ENCODE measurements at regions of chr10 and their contacts with region 1.

Region 1: GRCh38 chr10:104121520-104122224 is at the start of gene SFR1:
- DNase-seq: peak; percentile 71
- H3K4me3 ChIP-seq: peak within 1 kb of the TSS; percentile 86
- CTCF ChIP-seq: peak; percentile 81

Region 2: GRCh38 chr10:103895411-103896186 is 226.1 kb before region 1 on chr10:
- CTCF ChIA-PET with region 1: interaction called, 97 read pairs
- POLR2A ChIA-PET with region 1: no interaction called
- DNase-seq: no peak
- H3K4me3 ChIP-seq: no peak overlapping the region
- CTCF ChIP-seq: no peak

Region 3: DNA sequence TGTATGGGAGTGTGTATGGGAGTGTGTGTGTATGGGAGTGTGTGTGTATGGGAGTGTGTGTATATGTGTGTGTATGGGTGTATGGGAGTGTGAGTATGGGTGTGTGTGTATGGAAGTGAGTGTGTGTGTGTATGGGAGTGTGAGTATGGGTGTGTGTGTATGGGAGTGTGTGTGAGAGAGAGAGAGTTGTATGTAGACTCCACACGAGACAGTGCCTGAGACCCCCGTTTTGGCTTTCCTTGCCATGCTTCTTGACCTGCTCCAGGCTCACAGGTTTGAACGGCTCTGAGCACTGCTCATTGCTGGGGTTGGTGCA is 85.6 kb before region 1 on chr10:
- CTCF ChIA-PET with region 1: interaction called, 15 read pairs
- POLR2A ChIA-PET with region 1: interaction called, 3 read pairs
- DNase-seq: no peak
- H3K4me3 ChIP-seq: no peak overlapping the region
- CTCF ChIP-seq: no peak

Region 4: DNA sequence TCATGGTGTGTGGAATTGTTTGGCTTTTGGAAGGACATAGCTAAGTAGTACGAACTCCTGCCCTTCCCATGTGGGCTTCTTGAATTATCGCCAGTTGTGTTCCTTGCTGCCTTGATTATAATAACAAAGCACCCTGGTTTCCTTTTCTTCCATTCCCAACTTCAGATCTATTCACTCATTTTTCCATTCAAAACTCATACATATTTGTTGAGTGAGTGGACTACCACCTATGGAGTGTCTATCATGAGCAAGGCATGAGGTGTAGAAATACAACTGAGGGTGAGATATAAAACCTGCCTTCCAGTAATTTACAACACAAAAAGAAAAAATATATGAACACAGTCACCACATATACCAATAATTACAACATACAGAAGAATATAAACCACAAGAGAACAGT is 31.1 kb before region 1 on chr10:
- CTCF ChIA-PET with region 1: interaction called, 13 read pairs
- POLR2A ChIA-PET with region 1: no interaction called
- DNase-seq: no peak
- H3K4me3 ChIP-seq: no peak overlapping the region
- CTCF ChIP-seq: no peak

Region 5: DNA sequence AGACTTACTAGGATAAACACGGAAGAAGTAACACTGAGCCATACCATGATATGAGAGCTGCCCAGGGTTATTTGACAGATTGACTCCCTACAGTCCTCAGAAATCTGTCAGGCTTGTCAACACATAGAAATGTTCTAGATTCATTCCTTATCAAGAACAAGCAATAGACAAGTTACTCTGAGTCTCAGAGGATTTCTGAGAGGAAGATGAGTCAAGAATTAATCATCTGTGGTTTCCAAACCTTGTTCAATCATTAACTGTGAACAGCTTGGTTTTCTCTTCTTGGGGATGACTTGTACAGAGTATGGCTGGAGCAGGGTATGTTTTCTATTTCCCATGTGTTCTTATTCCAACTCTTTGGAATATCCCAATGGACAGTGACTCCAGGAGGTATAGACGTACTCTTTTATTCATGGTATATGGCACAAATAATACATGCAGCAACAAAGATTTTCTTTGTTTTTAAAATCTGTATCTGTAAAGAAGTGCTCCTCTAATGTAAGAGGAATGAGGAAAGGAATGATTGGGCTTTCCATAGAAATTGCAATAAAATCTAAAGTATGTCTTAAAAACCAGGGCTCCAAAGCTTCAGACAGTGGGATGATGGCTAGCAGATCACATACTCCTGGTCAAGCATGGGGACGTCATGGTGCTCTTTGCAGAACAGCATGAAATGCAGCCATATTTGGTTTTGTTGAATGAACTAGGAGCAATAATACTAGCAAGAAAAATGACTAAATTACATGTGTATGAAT is 11.6 kb before region 1 on chr10:
- CTCF ChIA-PET with region 1: interaction called, 36 read pairs
- POLR2A ChIA-PET with region 1: interaction called, 19 read pairs
- DNase-seq: peak; percentile 63
- H3K4me3 ChIP-seq: no peak overlapping the region
- CTCF ChIP-seq: no peak

Region 6: DNA sequence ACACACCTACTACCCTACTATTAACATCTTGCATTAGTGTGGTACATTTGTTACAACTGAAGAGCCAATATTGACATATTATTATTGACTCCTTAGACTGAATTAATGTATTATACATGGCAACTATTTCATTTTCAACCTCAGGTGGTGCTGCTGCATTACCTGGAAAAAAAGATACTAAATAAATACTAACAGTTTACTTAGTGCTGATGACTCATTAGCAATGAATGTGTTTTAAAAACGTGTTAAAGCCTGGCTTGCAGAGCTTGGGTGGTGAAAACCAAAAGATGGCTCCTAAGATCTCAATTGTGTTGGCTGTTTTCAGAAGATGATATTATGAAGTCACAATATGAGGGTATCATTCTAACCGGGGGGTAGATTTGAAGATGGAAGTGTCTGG is 75.7 kb after region 1 on chr10:
- CTCF ChIA-PET with region 1: no interaction called
- POLR2A ChIA-PET with region 1: no interaction called
- DNase-seq: no peak
- H3K4me3 ChIP-seq: no peak overlapping the region
- CTCF ChIP-seq: no peak

Region 7: DNA sequence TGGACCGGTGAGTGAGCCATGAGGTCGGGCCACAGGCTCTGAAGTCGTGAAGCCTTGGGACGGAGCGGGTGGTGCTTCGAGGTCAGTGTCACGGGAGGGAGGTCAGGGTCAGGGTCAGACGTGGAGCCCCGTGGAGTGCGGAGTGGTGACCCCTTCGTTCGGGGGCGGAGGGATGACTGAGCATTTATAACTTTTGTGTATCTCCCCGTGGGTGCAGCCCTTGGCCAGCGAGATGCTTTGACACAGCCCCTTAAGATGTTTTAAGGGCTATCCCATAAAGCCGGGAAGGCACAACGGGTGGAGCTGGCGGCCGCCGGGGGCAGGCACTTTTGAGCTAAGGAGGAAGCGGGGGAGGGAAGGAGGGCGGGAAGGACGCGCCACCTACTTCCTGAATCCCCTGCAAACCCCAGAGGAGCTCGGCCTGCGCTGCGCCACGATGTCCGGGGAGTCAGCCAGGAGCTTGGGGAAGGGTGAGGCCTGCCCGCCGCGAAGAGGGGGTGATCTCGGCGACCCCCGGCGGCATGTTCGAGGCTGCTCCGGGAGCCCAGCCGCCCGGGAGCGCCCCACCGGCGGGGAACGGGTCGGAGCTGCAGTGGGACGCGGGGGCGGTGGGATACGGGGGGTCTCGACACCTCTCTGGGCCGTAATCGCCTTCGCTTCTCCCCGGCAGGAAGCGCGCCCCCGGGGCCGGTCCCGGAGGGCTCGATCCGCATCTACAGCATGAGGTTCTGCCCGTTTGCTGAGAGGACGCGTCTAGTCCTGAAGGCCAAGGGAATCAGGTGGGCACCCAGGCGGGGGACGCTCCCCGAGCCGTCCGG is 133.0 kb after region 1 on chr10 and contains the start of gene GSTO1:
- CTCF ChIA-PET with region 1: no interaction called
- POLR2A ChIA-PET with region 1: interaction called, 10 read pairs
- DNase-seq: no peak
- H3K4me3 ChIP-seq: peak within 1 kb of the TSS; percentile 81
- CTCF ChIP-seq: peak; percentile 3

Measured in AG04449 (cell line).